Endothelial cell of umbilical vein (primary cell): ENCODE measurements at regions of chr2 and their contacts with region 1.

Region 1: DNA sequence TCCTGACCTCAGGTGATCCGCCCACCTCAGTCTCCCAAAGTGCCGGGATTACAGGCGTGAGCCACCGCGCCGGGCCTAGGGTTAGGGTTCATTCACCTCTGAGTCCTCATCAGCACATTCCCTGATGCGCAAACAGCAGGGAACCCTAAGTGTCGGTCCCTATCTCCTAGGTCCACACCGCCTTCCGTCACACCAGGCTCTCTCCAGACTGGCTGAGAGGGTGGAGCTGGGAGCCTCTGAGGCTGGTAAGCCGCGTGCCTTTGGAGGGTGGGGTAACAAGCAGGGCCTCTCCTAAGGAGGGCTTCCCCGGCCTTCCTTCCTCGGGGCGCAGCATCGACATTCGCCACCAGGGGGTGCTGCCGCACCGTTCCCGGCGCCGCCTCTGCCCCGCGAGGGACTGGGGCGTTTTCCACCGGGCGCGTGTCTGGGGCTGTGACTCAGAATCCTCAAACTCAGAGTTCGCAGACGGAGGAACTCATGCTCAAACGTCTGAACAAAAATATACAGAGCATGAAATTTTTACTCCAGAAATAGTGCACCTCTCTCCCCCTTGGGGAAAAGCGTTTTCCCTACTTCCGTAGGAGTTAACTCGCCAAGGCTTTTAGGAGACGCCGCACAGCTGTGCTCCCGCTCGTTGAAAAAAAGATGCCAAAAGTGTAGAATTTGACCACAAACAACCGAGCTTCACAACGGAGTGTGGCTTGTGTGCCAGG is 63.9 kb upstream of the ASAP2 start:
- DNase-seq: peak; percentile 78
- H3K4me3 ChIP-seq: peak overlapping the region in 1 of 3 experiments; percentile 6
- H3K27ac ChIP-seq: no peak overlapping the region
- H3K4me1 ChIP-seq: peaks cover 5% of the 10 kb centered on the region
- H3K27me3 ChIP-seq: no peaks in the 10 kb centered on the region
- CTCF ChIP-seq: peak; percentile 95 to 96
- POLR2A ChIP-seq: no peak

Region 2: GRCh38 chr2:8882094-8882493 is 260.6 kb before region 1 on chr2:
- CTCF ChIA-PET with region 1: interaction called, 20 read pairs
- POLR2A ChIA-PET with region 1: no interaction called
- dilution Hi-C with region 1: no loop called
- intact Hi-C with region 1: no loop called
- DNase-seq: no peak
- H3K4me3 ChIP-seq: no peak overlapping the region
- H3K27ac ChIP-seq: no peak overlapping the region
- H3K4me1 ChIP-seq: no peaks in the 10 kb centered on the region
- H3K27me3 ChIP-seq: no peaks in the 10 kb centered on the region
- CTCF ChIP-seq: peak; percentile 26 to 31
- POLR2A ChIP-seq: no peak

Region 3: DNA sequence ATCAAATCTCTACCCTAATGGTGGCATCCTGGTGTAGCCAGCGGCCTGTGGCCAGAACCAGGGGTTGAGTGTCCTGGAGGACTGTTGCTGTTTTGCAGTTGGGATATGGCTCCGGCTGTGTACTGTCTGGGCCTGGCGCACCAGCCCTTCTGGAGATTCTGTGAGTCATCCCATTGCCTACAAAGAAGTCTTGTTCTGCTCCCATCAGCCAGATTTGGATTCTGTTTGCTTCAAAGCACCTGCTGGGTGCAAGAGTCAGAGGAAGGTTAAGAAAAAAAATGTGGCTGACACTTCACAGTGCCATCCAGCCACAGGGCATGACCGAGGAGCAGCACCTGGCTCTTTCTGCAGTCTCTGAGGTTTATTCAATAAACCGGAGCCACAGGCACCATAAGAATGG is 22.9 kb after region 1 on chr2:
- CTCF ChIA-PET with region 1: no interaction called
- POLR2A ChIA-PET with region 1: no interaction called
- dilution Hi-C with region 1: no loop called
- intact Hi-C with region 1: no loop called
- DNase-seq: no peak
- H3K4me3 ChIP-seq: no peak overlapping the region
- H3K27ac ChIP-seq: no peak overlapping the region
- H3K4me1 ChIP-seq: no peaks in the 10 kb centered on the region
- H3K27me3 ChIP-seq: no peaks in the 10 kb centered on the region
- CTCF ChIP-seq: no peak
- POLR2A ChIP-seq: no peak

Region 4: DNA sequence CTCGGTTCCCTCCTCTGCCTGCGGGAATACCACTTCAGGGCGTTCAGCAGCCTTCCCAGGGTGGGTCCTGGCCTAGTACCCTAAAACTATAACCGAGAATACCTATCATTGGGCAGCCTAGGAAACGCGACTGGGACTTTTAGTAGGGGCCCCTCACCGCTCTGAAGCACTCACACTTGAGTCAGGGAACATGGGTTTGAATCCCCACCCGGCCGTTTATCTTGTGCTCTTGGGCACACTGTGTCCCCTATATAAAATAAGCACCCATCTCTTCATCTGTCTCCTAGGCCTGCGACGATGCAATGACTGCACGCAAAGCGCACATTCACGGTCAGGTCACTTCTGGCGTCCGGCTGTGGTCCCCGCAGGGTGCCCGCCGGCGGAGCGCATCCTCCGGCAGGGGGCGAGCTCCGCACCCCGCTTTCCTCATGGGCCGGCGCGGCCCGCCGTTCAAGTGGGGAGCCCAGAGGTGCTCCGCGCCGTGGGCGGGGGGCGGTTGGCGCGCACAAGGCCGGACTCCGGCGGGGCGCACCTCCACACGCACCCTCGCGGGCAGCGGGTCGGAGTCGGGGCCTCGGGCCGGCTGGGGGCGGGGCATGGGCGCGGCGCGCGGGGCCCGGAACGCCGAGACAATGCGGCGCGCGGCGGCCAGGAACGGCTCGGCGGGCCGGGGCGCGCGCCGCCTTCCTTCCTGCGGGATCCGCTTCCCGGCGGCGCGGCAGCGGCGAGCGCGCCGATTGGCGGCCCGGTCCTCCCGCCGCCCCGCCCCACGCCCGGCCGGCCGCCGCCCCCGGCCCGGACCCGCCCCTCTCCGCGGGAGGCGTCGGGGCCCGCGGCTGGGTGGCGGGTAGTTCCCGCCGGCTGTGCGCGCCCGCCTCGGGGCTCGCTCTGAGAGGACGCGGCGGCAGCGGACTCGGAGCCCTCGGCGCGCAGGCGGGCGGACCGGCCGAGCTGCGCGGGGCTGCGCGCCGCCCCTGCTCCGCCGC is 63.5 kb after region 1 on chr2 and contains the start of gene ASAP2:
- CTCF ChIA-PET with region 1: interaction called, 6 read pairs
- POLR2A ChIA-PET with region 1: no interaction called
- dilution Hi-C with region 1: no loop called
- intact Hi-C with region 1: loop called (anchors 1 kb)
- DNase-seq: peak; percentile 70
- H3K4me3 ChIP-seq: peak within 1 kb of the TSS; percentile 61 to 91 (median 72)
- H3K27ac ChIP-seq: peak within 1 kb of the TSS; percentile 81
- H3K4me1 ChIP-seq: peaks cover 31% of the 10 kb centered on the region
- H3K27me3 ChIP-seq: no peaks in the 10 kb centered on the region
- CTCF ChIP-seq: peak; percentile 86
- POLR2A ChIP-seq: peak; percentile 46
- total RNA-seq, gene ASAP2: 75.8 and 79.2 TPM in 2 replicates

Region 5: DNA sequence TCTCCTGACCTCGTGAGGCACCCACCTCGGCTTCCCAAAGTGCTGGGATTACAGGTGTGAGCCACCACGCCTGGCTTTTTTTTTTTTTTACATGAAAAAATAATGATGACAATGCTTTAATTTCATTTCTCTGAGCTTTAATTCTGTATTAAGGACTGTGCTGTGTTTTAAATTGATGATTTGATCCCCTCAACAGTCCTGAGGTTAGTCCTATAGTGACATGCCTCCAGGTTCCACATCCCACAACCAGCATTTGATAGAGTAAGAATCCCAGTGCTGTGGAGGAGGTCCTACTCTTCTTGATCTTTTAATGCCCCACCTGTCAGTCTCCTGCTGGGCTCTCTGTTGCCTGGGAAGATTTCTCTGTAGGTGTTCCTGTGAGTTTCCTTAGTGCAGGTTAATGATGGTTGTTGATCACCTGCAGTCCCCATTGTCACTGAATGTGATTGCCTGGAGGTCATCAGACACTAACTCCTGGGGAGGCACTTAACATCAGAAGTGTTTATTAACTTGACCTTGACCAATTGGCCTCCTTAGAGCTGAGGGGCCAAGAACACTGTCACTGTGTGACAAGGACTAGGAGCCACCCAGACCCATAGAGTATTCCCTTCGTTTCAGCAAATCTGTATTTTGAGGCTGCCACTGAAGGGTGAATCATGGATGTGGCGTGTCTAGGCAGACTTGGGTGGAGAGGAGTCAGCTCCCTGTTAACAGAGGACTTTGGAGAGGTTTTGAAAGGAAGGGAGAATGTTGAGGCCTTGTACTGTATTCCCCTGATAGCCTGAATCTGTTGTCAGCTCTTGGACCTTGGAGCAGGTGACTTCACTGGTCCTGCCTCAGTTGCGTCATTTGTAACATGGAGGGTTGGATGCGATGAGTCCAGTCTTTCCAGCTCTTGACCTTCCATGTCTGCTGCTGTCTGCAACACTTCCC is 75.4 kb after region 1 on chr2:
- CTCF ChIA-PET with region 1: no interaction called
- POLR2A ChIA-PET with region 1: no interaction called
- dilution Hi-C with region 1: no loop called
- intact Hi-C with region 1: no loop called
- DNase-seq: no peak
- H3K4me3 ChIP-seq: no peak overlapping the region
- H3K27ac ChIP-seq: no peak overlapping the region
- H3K4me1 ChIP-seq: peaks cover 31% of the 10 kb centered on the region
- H3K27me3 ChIP-seq: no peaks in the 10 kb centered on the region
- CTCF ChIP-seq: no peak
- POLR2A ChIP-seq: no peak

Region 6: DNA sequence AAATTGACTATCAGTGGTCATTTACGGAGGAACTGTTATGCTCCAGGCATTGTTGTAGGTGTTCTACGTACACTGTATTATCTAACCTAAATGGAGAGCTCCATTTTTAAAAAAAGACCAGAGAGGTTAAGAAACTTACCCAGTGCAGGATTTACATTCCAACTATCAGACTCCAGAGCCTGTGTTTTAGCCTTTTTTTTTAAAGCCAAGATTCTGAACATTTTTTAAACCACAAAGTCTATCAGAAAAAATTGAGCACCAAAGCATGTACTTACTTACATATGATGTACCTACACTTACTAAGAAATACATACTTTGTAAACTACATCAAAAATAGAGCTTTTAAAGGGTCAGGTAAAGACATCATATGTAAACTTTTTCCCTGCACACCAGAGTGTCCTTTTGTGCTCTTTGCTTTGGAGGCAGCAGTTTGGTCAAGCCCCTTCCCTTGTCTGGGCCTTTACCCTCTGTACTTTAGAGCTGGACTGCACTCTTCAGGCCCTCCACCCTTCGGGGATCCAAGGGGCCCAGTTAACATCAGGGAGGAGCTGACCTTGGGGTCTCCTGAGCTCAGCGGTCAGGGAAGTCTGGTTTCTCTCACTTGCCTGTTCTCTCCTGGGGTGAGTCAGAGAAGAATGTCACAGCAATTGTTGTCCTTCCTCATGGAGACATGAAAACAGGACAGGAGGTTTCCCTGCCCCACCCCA is 222.2 kb after region 1 on chr2:
- CTCF ChIA-PET with region 1: interaction called, 16 read pairs
- POLR2A ChIA-PET with region 1: interaction called, 3 read pairs
- dilution Hi-C with region 1: no loop called
- intact Hi-C with region 1: loop called (anchors 2 kb)
- DNase-seq: peak; percentile 21
- H3K4me3 ChIP-seq: no peak overlapping the region
- H3K27ac ChIP-seq: no peak overlapping the region
- H3K4me1 ChIP-seq: peaks cover 7% of the 10 kb centered on the region
- H3K27me3 ChIP-seq: no peaks in the 10 kb centered on the region
- CTCF ChIP-seq: no peak
- POLR2A ChIP-seq: no peak

Region 7: GRCh38 chr2:9423100-9423921 is 280.6 kb after region 1 on chr2 and contains the starts of genes CPSF3 and ITGB1BP1:
- CTCF ChIA-PET with region 1: interaction called, 3 read pairs
- POLR2A ChIA-PET with region 1: no interaction called
- dilution Hi-C with region 1: no loop called
- intact Hi-C with region 1: loop called (anchors 1 kb)
- DNase-seq: peak; percentile 96
- H3K4me3 ChIP-seq: peak within 1 kb of the TSS; percentile 52 to 98 (median 75)
- H3K27ac ChIP-seq: peak within 1 kb of the TSS; percentile 62
- H3K4me1 ChIP-seq: peaks cover 16% of the 10 kb centered on the region
- H3K27me3 ChIP-seq: no peaks in the 10 kb centered on the region
- CTCF ChIP-seq: no peak
- POLR2A ChIP-seq: peak; percentile 76
- total RNA-seq, gene CPSF3: 35.6 and 37.1 TPM in 2 replicates
- total RNA-seq, gene ITGB1BP1: 95.5 and 170 TPM in 2 replicates